B cell (primary cell): ENCODE measurements at regions of chr4 and their contacts with region 1.

Region 1: GRCh38 chr4:75673027-75673958 is at the start of gene G3BP2:
- DNase-seq: peak; percentile 99
- ATAC-seq: peak; percentile 92
- H3K4me3 ChIP-seq: peak within 1 kb of the TSS; percentile 90 to 100 (median 96)
- H3K4me3 Mint-ChIP-seq: peak within 1 kb of the TSS; percentile 99
- H3K27ac ChIP-seq: peak within 1 kb of the TSS; percentile 95 to 99
- H3K27ac Mint-ChIP-seq: peak within 1 kb of the TSS; percentile 99
- H3K4me1 ChIP-seq: peaks cover 34 to 37% of the 10 kb centered on the region in 2 donors
- H3K4me1 Mint-ChIP-seq: peaks cover 44% of the 10 kb centered on the region
- H3K27me3 ChIP-seq: no peaks in the 10 kb centered on the region
- H3K27me3 Mint-ChIP-seq: no peaks in the 10 kb centered on the region
- CTCF ChIP-seq: no peak
- total RNA-seq, gene G3BP2: 154 and 155 TPM in 2 replicates

Region 2: GRCh38 chr4:75514131-75514948 is 159.0 kb before region 1 on chr4 and contains the starts of genes RCHY1 and THAP6:
- CTCF ChIA-PET with region 1: no interaction called
- POLR2A ChIA-PET with region 1: interaction called, 3 read pairs
- intact Hi-C with region 1: loop called (anchors 1 kb)
- DNase-seq: peak; percentile 96
- ATAC-seq: peak; percentile 87
- H3K4me3 ChIP-seq: peak within 1 kb of the TSS; percentile 76 to 94 (median 85)
- H3K4me3 Mint-ChIP-seq: no peak within 1 kb of the TSS
- H3K27ac ChIP-seq: peak within 1 kb of the TSS; percentile 93 to 96
- H3K27ac Mint-ChIP-seq: peak within 1 kb of the TSS; percentile 97
- H3K4me1 ChIP-seq: peaks cover 29 to 32% of the 10 kb centered on the region in 2 donors
- H3K4me1 Mint-ChIP-seq: peaks cover 36% of the 10 kb centered on the region
- H3K27me3 ChIP-seq: no peaks in the 10 kb centered on the region
- H3K27me3 Mint-ChIP-seq: no peaks in the 10 kb centered on the region
- CTCF ChIP-seq: peak; percentile 7
- total RNA-seq, gene RCHY1: 33.3 and 34.5 TPM in 2 replicates
- total RNA-seq, gene THAP6: 34.5 and 38.3 TPM in 2 replicates

Region 3: DNA sequence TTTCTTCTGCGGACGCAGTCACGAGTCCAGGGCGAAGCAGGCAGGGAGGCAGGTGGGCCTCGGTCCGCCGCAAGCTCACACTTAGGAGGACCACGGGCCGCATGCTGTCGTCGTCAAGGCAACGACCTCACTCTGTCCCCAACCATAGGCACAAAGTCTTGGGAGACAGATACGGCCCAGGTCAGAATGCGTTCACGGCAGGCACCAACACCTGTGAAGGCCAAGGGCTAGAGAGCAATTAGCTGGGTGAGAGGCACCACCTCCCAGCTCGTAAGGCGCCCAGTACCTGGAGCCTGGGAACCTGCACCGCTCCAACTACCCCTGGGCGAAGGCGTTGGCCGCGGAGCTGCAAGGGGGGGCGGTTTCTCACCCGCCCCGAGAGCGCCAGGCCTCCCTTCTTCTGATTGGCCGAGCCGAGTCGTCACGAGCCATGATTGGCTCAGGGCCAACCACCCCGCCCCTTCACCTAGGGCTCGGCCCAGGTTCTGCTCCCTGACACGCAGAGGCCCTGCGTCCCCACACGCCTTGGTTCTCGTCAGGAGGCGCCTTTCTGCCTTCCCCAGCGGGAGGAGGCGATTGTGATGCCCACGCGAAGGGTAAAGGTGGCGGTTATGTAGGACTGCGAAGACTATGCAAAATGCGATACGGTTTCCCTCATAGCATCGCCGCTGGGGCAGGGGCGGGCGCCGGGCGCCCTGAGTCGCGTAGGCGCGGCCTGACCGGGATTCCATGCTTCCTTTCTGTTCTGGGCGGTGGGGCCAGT is 42.9 kb before region 1 on chr4 and contains the start of gene CDKL2:
- CTCF ChIA-PET with region 1: no interaction called
- POLR2A ChIA-PET with region 1: no interaction called
- intact Hi-C with region 1: loop called (anchors 1 kb)
- DNase-seq: peak; percentile 93
- ATAC-seq: peak; percentile 100
- H3K4me3 ChIP-seq: peak within 1 kb of the TSS; percentile 45 to 84 (median 68)
- H3K4me3 Mint-ChIP-seq: peak within 1 kb of the TSS; percentile 95
- H3K27ac ChIP-seq: peak within 1 kb of the TSS in 1 of 2 donors; percentile 59
- H3K27ac Mint-ChIP-seq: peak within 1 kb of the TSS; percentile 71
- H3K4me1 ChIP-seq: peaks cover 4 to 14% of the 10 kb centered on the region in 2 donors
- H3K4me1 Mint-ChIP-seq: peaks cover 11% of the 10 kb centered on the region
- H3K27me3 ChIP-seq: no peaks in the 10 kb centered on the region
- H3K27me3 Mint-ChIP-seq: no peaks in the 10 kb centered on the region
- CTCF ChIP-seq: no peak
- total RNA-seq, gene CDKL2: 0.27 and 0.81 TPM in 2 replicates

Region 4: GRCh38 chr4:75653845-75654503 is 19.3 kb before region 1 on chr4:
- CTCF ChIA-PET with region 1: interaction called, 4 read pairs
- POLR2A ChIA-PET with region 1: interaction called, 6 read pairs
- intact Hi-C with region 1: loop called (anchors 1 kb)
- DNase-seq: peak; percentile 24
- ATAC-seq: no peak
- H3K4me3 ChIP-seq: no peak overlapping the region
- H3K4me3 Mint-ChIP-seq: no peak overlapping the region
- H3K27ac ChIP-seq: no peak overlapping the region
- H3K27ac Mint-ChIP-seq: peak overlapping the region; percentile 74
- H3K4me1 ChIP-seq: no peaks in the 10 kb centered on the region
- H3K4me1 Mint-ChIP-seq: peaks cover 30% of the 10 kb centered on the region
- H3K27me3 ChIP-seq: no peaks in the 10 kb centered on the region
- H3K27me3 Mint-ChIP-seq: no peaks in the 10 kb centered on the region
- CTCF ChIP-seq: peak; percentile 49

Region 5: GRCh38 chr4:75698162-75698962 is 25.1 kb after region 1 on chr4:
- CTCF ChIA-PET with region 1: interaction called, 4 read pairs
- POLR2A ChIA-PET with region 1: interaction called, 3 read pairs
- intact Hi-C with region 1: loop called (anchors 1 kb)
- DNase-seq: peak; percentile 88
- ATAC-seq: peak; percentile 97
- H3K4me3 ChIP-seq: peak overlapping the region in 2 of 5 experiments; percentile 22 to 35
- H3K4me3 Mint-ChIP-seq: peak overlapping the region; percentile 35
- H3K27ac ChIP-seq: peak overlapping the region; percentile 95 to 97
- H3K27ac Mint-ChIP-seq: peak overlapping the region; percentile 83
- H3K4me1 ChIP-seq: peaks cover 23 to 31% of the 10 kb centered on the region in 2 donors
- H3K4me1 Mint-ChIP-seq: peaks cover 34% of the 10 kb centered on the region
- H3K27me3 ChIP-seq: no peaks in the 10 kb centered on the region
- H3K27me3 Mint-ChIP-seq: no peaks in the 10 kb centered on the region
- CTCF ChIP-seq: no peak